Activated CD8-positive, alpha-beta T cell treated with anti-CD3 and anti-CD28 coated beads, Interleukin-2, amount 10 ng/mL, durations not matched to agents 7 days and 5 days (primary cell): ENCODE measurements at regions of chr3 and their contacts with region 1.

Region 1: DNA sequence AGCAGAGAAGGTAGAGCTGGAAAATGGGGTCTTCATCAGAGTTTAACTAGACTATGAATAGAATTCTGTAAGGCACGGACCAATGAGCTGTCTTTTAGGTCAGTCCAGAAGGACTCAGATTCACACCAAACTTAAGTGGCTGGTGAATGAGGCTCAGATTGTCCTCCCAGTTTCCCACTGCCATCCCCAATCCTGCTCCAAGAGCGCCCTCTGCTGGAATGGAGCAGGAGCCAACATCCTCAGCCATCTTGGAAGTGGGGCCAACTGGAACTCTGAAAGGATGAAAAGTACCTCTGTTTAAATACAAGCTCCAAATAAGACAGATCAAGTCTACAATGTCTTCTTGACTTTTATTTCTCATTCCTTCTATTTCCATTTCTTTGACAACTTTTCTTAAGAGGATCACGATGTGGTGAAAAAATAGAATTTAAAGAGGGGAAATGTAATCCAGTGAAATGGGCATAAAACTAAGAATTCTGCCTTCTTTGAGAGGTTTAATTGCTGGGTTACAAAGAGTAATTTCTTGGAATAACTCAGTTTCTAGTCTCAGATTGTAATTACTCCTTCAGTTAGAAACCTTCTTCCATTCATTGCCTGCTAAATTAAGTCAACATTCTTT is 217.1 kb upstream of the TPRG1 start:
- DNase-seq: peak; percentile 80
- ATAC-seq: peak; percentile 69
- H3K4me3 Mint-ChIP-seq: no peak overlapping the region
- H3K27ac Mint-ChIP-seq: no peak overlapping the region
- H3K4me1 Mint-ChIP-seq: peaks cover 16% of the 10 kb centered on the region
- H3K27me3 Mint-ChIP-seq: no peaks in the 10 kb centered on the region

Region 2: GRCh38 chr3:188749010-188749617 is 205.6 kb before region 1 on chr3:
- CTCF ChIA-PET with region 1: interaction called, 21 read pairs
- POLR2A ChIA-PET with region 1: no interaction called
- DNase-seq: peak; percentile 66
- ATAC-seq: peak; percentile 65
- H3K4me3 Mint-ChIP-seq: no peak overlapping the region
- H3K27ac Mint-ChIP-seq: no peak overlapping the region
- H3K4me1 Mint-ChIP-seq: peaks cover 3% of the 10 kb centered on the region
- H3K27me3 Mint-ChIP-seq: no peaks in the 10 kb centered on the region

Region 3: DNA sequence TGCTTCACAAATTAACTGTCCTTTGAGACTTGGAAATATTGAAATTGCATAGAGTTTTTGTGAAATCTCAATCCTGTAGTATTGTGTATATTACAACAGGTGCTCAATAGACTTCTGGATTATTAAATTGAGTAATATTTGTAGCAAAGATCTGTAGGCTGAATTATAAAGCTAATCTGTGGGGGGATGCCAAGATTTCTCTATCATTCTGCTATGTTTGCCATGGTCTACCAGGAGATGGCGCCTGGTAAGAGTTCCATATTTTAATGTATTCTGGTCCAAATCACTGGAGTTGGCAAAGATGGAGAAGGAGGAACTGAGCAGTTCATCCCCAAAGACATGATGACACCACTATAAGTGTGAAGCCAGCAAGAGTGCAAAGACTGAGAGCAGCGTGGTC is 123.8 kb before region 1 on chr3:
- CTCF ChIA-PET with region 1: interaction called, 46 read pairs
- POLR2A ChIA-PET with region 1: no interaction called
- DNase-seq: no peak
- ATAC-seq: no peak
- H3K4me3 Mint-ChIP-seq: no peak overlapping the region
- H3K27ac Mint-ChIP-seq: no peak overlapping the region
- H3K4me1 Mint-ChIP-seq: peaks cover 12% of the 10 kb centered on the region
- H3K27me3 Mint-ChIP-seq: no peaks in the 10 kb centered on the region

Region 4: GRCh38 chr3:188875413-188875812 is 79.3 kb before region 1 on chr3:
- CTCF ChIA-PET with region 1: interaction called, 14 read pairs
- POLR2A ChIA-PET with region 1: no interaction called
- DNase-seq: no peak
- ATAC-seq: no peak
- H3K4me3 Mint-ChIP-seq: no peak overlapping the region
- H3K27ac Mint-ChIP-seq: no peak overlapping the region
- H3K4me1 Mint-ChIP-seq: no peaks in the 10 kb centered on the region
- H3K27me3 Mint-ChIP-seq: no peaks in the 10 kb centered on the region

Region 5: GRCh38 chr3:188934989-188935388 is 19.7 kb before region 1 on chr3:
- CTCF ChIA-PET with region 1: interaction called, 22 read pairs
- POLR2A ChIA-PET with region 1: no interaction called
- DNase-seq: no peak
- ATAC-seq: no peak
- H3K4me3 Mint-ChIP-seq: no peak overlapping the region
- H3K27ac Mint-ChIP-seq: no peak overlapping the region
- H3K4me1 Mint-ChIP-seq: no peaks in the 10 kb centered on the region
- H3K27me3 Mint-ChIP-seq: peaks cover 4% of the 10 kb centered on the region

Region 6: GRCh38 chr3:189001559-189001958 is 46.9 kb after region 1 on chr3:
- CTCF ChIA-PET with region 1: interaction called, 10 read pairs
- POLR2A ChIA-PET with region 1: no interaction called
- DNase-seq: no peak
- ATAC-seq: no peak
- H3K4me3 Mint-ChIP-seq: no peak overlapping the region
- H3K27ac Mint-ChIP-seq: no peak overlapping the region
- H3K4me1 Mint-ChIP-seq: no peaks in the 10 kb centered on the region
- H3K27me3 Mint-ChIP-seq: peaks cover 4% of the 10 kb centered on the region

Region 7: GRCh38 chr3:189148081-189148507 is 193.4 kb after region 1 on chr3:
- CTCF ChIA-PET with region 1: interaction called, 173 read pairs
- POLR2A ChIA-PET with region 1: no interaction called
- DNase-seq: peak; percentile 79
- ATAC-seq: peak; percentile 61
- H3K4me3 Mint-ChIP-seq: no peak overlapping the region
- H3K27ac Mint-ChIP-seq: no peak overlapping the region
- H3K4me1 Mint-ChIP-seq: peaks cover 24% of the 10 kb centered on the region
- H3K27me3 Mint-ChIP-seq: no peaks in the 10 kb centered on the region